Activated CD8-positive, alpha-beta T cell treated with anti-CD3 and anti-CD28 coated beads for 36 hours (primary cell): ENCODE measurements at regions of chr7 and their contacts with region 1.

Region 1: DNA sequence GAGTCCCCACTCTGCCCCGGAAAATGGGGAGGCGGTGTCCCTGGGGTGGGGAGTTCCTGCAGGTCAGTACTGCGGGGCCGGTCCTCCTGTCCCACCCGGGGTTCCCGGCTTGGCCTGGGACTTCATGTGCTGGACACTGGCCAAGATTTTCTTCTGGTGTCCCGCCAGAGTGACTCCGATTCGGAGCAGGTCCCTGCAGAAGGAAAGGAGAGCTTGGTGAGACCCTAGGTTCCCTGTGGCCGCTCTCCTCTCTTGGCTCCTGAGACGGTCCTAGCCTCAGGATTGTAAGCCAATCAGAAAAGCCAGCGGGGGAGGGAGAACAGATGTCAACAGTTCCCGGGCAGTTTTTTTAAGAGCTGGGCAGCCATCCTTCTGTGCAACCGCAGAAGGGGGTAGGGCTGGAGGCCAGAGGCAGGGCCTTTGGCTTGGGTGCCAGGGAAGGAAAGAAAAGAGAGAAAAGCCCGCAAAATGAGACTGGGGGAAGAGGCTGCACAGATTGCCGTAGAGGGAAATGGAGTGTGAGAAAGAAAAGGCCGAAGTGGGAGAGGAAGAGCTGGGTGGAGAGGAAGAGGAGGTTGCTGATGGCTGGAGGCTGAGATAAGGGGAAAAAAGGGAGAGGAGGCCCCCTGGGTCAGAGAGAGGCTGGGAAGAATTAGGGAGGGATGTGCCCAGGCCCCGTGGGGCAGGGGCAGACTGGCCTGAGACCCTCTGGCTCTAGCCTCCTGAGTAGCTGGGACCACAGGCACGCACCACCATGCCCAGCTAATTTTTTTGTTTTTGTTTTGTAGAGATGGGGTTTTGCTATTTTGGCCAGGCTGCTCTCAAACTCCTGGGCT is 23.7 kb downstream of the EPHB4 start:
- DNase-seq: peak; percentile 72
- ATAC-seq: peak; percentile 87
- H3K4me3 Mint-ChIP-seq: no peak overlapping the region
- H3K27ac Mint-ChIP-seq: no peak overlapping the region
- H3K4me1 Mint-ChIP-seq: peaks cover 4% of the 10 kb centered on the region
- H3K27me3 Mint-ChIP-seq: peaks cover 5% of the 10 kb centered on the region
- CTCF ChIP-seq: no peak

Region 2: DNA sequence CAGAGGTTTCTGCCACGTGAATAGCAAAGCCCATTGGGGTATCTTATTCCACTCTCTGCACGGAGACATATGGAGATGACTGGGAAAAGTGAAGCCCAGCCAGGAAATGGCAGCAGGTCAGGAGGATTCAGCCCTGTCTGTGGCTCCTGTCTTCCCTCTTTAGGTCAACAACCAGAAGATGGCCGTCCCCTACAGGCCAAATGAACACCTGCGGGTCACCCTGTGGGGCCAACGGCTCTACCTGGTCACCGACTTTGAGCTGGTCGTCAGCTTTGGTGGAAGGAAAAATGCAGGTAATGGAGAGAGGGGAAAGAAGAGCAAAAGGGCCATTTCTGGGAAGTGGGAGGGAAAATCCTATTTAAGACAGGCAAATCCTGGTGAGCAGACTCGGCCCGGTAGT is 14.6 kb before region 1 on chr7:
- CTCF ChIA-PET with region 1: interaction called, 27 read pairs
- POLR2A ChIA-PET with region 1: no interaction called
- intact Hi-C with region 1: no loop called
- DNase-seq: no peak
- ATAC-seq: no peak
- H3K4me3 Mint-ChIP-seq: no peak overlapping the region
- H3K27ac Mint-ChIP-seq: no peak overlapping the region
- H3K4me1 Mint-ChIP-seq: peaks cover 2% of the 10 kb centered on the region
- H3K27me3 Mint-ChIP-seq: peaks cover 3% of the 10 kb centered on the region
- CTCF ChIP-seq: no peak

Region 3: DNA sequence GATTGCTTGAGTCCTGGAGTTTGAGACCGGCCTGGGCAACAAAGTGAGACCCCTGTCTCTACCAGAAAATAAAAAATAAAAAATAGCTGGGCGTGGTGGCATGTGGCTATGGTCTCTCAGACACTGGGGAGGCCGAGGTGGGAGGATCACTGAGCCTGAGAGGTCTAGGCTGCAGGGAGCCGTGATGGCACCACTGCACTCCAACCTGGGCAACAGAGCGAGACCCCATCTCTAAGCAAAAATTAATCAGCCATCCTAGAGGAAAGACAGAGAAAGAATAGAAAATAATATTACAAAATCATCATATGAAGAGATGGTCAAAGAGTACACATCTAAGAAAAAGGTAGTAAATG is 28.6 kb after region 1 on chr7:
- CTCF ChIA-PET with region 1: interaction called, 11 read pairs
- POLR2A ChIA-PET with region 1: no interaction called
- intact Hi-C with region 1: no loop called
- DNase-seq: no peak
- ATAC-seq: no peak
- H3K4me3 Mint-ChIP-seq: no peak overlapping the region
- H3K27ac Mint-ChIP-seq: no peak overlapping the region
- H3K4me1 Mint-ChIP-seq: peaks cover 13% of the 10 kb centered on the region
- H3K27me3 Mint-ChIP-seq: peaks cover 12% of the 10 kb centered on the region
- CTCF ChIP-seq: no peak

Region 4: GRCh38 chr7:100852048-100852872 is 48.6 kb after region 1 on chr7 and contains the start of gene SLC12A9:
- CTCF ChIA-PET with region 1: interaction called, 167 read pairs
- POLR2A ChIA-PET with region 1: interaction called, 5 read pairs
- intact Hi-C with region 1: loop called (anchors 5 kb)
- DNase-seq: peak; percentile 92
- ATAC-seq: peak; percentile 98
- H3K4me3 Mint-ChIP-seq: peak within 1 kb of the TSS; percentile 90
- H3K27ac Mint-ChIP-seq: peak within 1 kb of the TSS; percentile 77
- H3K4me1 Mint-ChIP-seq: peaks cover 15% of the 10 kb centered on the region
- H3K27me3 Mint-ChIP-seq: no peaks in the 10 kb centered on the region
- CTCF ChIP-seq: peak; percentile 95
- total RNA-seq, gene SLC12A9: 10.2 to 11.3 TPM

Region 5: DNA sequence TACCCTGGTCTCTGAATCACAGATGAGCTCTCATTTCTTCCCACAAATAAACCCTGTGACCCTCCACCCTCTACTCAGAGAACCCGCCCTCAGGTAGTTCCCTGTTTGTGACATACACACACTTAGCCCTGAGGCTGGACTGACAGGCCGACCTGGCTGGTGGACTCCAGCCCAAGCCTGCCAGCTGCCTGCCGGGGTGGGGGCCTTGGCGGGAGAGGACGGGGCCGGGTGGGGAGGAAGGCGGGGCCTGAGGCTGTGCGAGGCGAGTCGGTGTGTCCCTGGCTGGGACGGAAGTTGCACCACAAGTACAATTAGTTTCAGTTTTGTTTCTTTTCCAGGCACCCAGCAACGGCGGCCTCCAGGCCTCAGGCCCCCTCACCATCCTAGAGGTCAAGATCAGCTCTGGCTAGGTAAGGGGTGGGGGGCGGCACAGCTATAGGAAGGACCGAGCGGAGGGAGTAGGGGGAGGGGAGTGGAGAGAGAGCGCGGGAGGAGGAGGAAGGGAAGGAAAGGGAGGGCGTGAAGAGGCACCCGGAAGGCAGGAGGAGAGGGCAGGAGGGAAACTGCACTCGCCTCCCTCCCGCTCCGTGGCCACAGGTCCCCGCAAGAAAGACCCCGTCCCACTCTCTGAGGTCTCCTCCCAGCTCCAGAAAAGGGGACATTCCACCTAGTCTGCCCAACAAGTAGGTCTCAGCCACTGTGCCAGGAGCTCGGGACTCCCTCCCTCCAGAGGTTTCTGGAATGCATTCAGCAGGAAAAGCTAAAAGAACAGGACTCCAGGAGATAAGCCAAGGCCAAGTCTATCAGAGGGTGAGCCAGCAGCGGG is 281.8 kb after region 1 on chr7 and contains the start of gene TRIM56:
- CTCF ChIA-PET with region 1: no interaction called
- POLR2A ChIA-PET with region 1: no interaction called
- intact Hi-C with region 1: no loop called
- DNase-seq: peak; percentile 88
- ATAC-seq: peak; percentile 92
- H3K4me3 Mint-ChIP-seq: peak within 1 kb of the TSS; percentile 95
- H3K27ac Mint-ChIP-seq: peak within 1 kb of the TSS; percentile 98
- H3K4me1 Mint-ChIP-seq: peaks cover 31% of the 10 kb centered on the region
- H3K27me3 Mint-ChIP-seq: no peaks in the 10 kb centered on the region
- CTCF ChIP-seq: no peak
- total RNA-seq, gene TRIM56: 40.1 to 42.3 TPM